Natural killer cell (primary cell): ENCODE measurements at regions of chr10 and their contacts with region 1.

Region 1: DNA sequence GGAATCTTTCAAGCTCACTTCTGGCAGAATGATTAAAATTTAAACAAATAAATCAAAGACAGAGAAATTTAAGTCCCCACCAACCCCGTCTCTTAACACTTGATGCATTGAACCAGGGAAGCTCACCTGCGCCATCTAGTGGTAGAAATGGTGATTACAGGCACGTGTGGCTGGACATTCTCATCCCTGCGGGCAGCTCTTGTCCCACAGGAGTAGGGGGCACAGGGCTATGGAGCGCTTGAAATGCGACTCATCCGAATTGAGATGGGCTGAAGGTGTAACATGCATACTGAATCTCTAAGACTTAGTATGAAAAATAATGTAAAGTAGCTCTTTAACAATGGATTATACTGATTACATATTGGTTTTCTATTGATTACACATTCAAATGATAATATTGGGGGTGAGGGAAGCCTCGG is 24.8 kb upstream of the SLIT1 start:
- DNase-seq: peak; percentile 63 to 85
- ATAC-seq: peak; percentile 61 to 79 (median 70)
- H3K4me3 ChIP-seq: no peak overlapping the region
- H3K4me3 Mint-ChIP-seq: no peak overlapping the region
- H3K27ac ChIP-seq: no peak overlapping the region
- H3K27ac Mint-ChIP-seq: no peak overlapping the region
- H3K4me1 ChIP-seq: no peaks in the 10 kb centered on the region
- H3K4me1 Mint-ChIP-seq: no peaks in the 10 kb centered on the region
- H3K27me3 ChIP-seq: no peaks in the 10 kb centered on the region
- H3K27me3 Mint-ChIP-seq: no peaks in the 10 kb centered on the region
- CTCF ChIP-seq: peak; percentile 99

Region 2: DNA sequence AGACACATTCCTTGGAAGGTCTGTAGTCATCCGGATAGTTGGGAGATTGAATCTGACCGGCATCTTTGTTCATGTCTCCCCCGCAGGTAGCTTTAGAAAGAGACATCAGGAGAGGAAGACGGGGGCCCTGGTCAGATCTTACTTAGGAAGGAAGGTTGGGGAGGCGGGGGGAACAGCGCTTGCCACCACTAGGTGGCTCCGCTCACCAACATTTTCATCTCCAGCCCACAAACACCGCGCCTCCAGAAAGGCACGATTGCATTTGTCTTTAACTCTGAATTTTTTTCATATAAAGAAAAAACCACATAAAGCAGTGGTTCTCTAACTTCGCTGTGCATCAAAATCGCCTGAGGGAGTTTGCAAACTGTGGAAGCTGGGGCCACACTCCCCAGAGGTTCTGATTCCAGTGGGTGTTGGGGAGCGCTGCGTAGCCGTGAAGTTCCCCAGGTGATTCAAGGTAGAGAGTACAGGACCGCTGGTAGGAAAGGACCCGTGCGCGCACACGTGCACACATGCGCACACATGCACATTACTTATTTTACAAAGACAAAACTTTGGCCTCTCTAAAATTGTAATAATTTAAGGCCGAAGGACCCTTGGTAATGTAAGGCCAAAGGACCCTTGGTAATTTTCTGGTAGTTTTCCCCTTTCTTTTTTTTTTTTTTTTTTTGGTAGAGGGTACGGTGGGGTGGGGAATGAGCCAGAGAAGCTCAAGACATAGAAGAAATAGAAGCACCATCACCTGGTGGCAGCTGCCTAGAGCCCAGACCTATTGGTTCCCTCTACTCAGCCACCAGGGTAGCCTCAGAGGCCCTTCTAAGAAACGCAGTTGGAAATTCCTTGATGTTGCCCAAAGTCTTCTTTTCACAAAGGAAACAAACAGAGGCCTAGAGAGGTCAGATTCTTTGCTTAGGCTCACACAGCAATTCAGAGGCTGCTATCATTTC is 814.3 kb before region 1 on chr10:
- intact Hi-C with region 1: loop called (anchors 1 kb)
- DNase-seq: peak; percentile 46 to 82
- ATAC-seq: peak; percentile 71 to 88 (median 72)
- H3K4me3 ChIP-seq: no peak overlapping the region
- H3K4me3 Mint-ChIP-seq: no peak overlapping the region
- H3K27ac ChIP-seq: no peak overlapping the region
- H3K27ac Mint-ChIP-seq: no peak overlapping the region
- H3K4me1 ChIP-seq: peaks cover 12% of the 10 kb centered on the region
- H3K4me1 Mint-ChIP-seq: peaks cover 5 to 7% of the 10 kb centered on the region in 2 donors
- H3K27me3 ChIP-seq: no peaks in the 10 kb centered on the region
- H3K27me3 Mint-ChIP-seq: peaks cover 18 to 30% of the 10 kb centered on the region in 2 donors
- CTCF ChIP-seq: peak; percentile 71

Region 3: DNA sequence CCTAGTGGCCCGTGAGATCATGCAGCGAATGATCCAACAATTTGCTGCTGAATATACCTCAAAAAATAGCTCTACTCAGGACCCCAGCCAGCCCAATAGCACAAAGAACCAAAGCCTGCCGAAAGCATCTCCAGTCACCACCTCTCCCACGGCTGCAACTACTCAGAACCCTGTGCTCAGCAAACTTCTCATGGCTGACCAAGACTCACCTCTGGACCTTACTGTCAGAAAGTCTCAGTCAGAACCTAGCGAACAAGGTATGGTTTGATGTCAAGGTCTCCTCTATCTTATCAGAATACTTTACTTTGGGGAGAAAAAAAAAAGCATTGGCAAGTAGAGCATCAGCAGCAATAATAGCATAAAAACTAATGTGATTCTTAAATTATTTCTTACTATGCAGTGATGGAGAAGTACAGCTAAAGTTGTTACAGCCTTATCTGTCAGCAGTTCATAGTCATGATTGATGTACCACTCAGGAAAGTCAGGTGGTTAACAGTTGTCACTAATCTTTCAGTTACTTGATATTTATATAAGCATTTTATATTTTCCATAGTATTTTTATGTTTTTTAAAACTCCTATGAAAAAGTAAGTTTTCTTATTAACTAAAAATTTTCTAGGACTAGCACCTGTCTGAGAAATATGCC is 261.4 kb before region 1 on chr10:
- intact Hi-C with region 1: no loop called
- DNase-seq: no peak
- ATAC-seq: no peak
- H3K4me3 ChIP-seq: no peak overlapping the region
- H3K4me3 Mint-ChIP-seq: no peak overlapping the region
- H3K27ac ChIP-seq: no peak overlapping the region
- H3K27ac Mint-ChIP-seq: peak overlapping the region in 1 of 2 donors; percentile 15
- H3K4me1 ChIP-seq: no peaks in the 10 kb centered on the region
- H3K4me1 Mint-ChIP-seq: peaks cover 18 to 29% of the 10 kb centered on the region in 2 donors
- H3K27me3 ChIP-seq: no peaks in the 10 kb centered on the region
- H3K27me3 Mint-ChIP-seq: no peaks in the 10 kb centered on the region
- CTCF ChIP-seq: no peak

Region 4: GRCh38 chr10:97037365-97038361 is 172.9 kb before region 1 on chr10:
- intact Hi-C with region 1: loop called (anchors 1 kb)
- DNase-seq: peak; percentile 52 to 79
- ATAC-seq: peak; percentile 82 to 94 (median 93)
- H3K4me3 ChIP-seq: peak overlapping the region; percentile 24
- H3K4me3 Mint-ChIP-seq: peak overlapping the region; percentile 76
- H3K27ac ChIP-seq: no peak overlapping the region
- H3K27ac Mint-ChIP-seq: no peak overlapping the region
- H3K4me1 ChIP-seq: peaks cover 11% of the 10 kb centered on the region
- H3K4me1 Mint-ChIP-seq: peaks cover 0 to 20% of the 10 kb centered on the region in 2 donors
- H3K27me3 ChIP-seq: no peaks in the 10 kb centered on the region
- H3K27me3 Mint-ChIP-seq: peaks cover 0 to 15% of the 10 kb centered on the region in 2 donors
- CTCF ChIP-seq: peak; percentile 79

Region 5: GRCh38 chr10:97072851-97073665 is 137.5 kb before region 1 on chr10:
- intact Hi-C with region 1: loop called (anchors 1 kb)
- DNase-seq: peak; percentile 74 to 83
- ATAC-seq: peak; percentile 59 to 91 (median 85)
- H3K4me3 ChIP-seq: no peak overlapping the region
- H3K4me3 Mint-ChIP-seq: no peak overlapping the region
- H3K27ac ChIP-seq: no peak overlapping the region
- H3K27ac Mint-ChIP-seq: no peak overlapping the region
- H3K4me1 ChIP-seq: no peaks in the 10 kb centered on the region
- H3K4me1 Mint-ChIP-seq: peaks cover 0 to 5% of the 10 kb centered on the region in 2 donors
- H3K27me3 ChIP-seq: peaks cover 5% of the 10 kb centered on the region
- H3K27me3 Mint-ChIP-seq: peaks cover 30 to 35% of the 10 kb centered on the region in 2 donors
- CTCF ChIP-seq: peak; percentile 88

Region 6: GRCh38 chr10:97138174-97138573 is 72.4 kb before region 1 on chr10:
- intact Hi-C with region 1: no loop called
- DNase-seq: no peak
- ATAC-seq: no peak
- H3K4me3 ChIP-seq: no peak overlapping the region
- H3K4me3 Mint-ChIP-seq: no peak overlapping the region
- H3K27ac ChIP-seq: no peak overlapping the region
- H3K27ac Mint-ChIP-seq: no peak overlapping the region
- H3K4me1 ChIP-seq: no peaks in the 10 kb centered on the region
- H3K4me1 Mint-ChIP-seq: no peaks in the 10 kb centered on the region
- H3K27me3 ChIP-seq: no peaks in the 10 kb centered on the region
- H3K27me3 Mint-ChIP-seq: peaks cover 16 to 19% of the 10 kb centered on the region in 2 donors
- CTCF ChIP-seq: no peak